ENCODE measurements at regions of chr12 and their contacts with region 1.

Region 1: GRCh38 chr12:104467346-104467837 is 10.6 kb downstream of the CHST11 start:
- DNase-seq: peak; percentile 64 to 92 (median 80)
- ATAC-seq: peak; percentile 78
- H3K4me3 ChIP-seq: no peak overlapping the region
- H3K27ac ChIP-seq: peak overlapping the region; percentile 71
- H3K4me1 ChIP-seq: peaks cover 26 to 76% of the 10 kb centered on the region in 2 experiments
- H3K27me3 ChIP-seq: no peaks in the 10 kb centered on the region
- CTCF ChIP-seq: no peak
- EP300 ChIP-seq: peak; percentile 99
- POLR2A ChIP-seq: no peak
- RAD21 ChIP-seq: peak; percentile 21 to 23; a peak in 2 of 4 replicates

Region 2: DNA sequence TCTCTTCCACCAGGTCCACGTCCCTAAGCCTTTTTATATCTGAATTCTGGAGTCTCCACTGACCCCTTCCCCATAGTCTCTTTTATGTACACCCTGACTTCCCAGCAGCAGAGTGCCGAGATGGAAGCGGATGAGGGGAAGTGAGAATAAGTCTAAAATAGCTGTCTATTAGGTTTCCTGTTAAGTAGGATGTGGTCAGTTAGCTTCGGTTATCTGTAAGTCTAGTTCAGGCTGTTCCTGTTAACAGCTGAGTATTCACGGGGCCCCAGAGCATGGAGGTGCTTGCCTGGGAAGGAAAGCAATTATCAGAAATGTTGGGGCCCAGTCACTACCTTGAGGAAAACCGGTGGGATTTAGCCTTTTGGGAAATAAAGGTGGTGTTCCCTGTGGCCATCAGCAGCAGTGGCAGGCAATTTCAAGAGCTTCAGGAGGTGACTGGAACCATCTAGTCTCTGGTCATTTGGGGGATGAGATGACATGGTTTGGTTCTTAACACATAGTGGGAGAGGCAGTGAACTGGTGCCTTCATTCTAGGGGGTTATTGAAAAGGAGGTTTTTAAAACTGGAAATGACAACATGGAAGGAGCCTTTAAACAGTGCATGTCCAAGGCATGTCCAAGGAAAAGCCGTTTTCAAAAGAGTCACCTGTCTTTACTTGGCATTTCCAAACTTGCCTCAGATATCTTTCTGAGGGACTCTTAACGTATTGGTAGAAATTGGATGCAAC is 11.2 kb after region 1 on chr12:
- CTCF ChIA-PET with region 1: no interaction called
- POLR2A ChIA-PET with region 1: interaction called, 13 read pairs
- in situ Hi-C with region 1: no loop called
- intact Hi-C with region 1: loop called (anchors 2 kb)
- DNase-seq: peak in 3 of 4 experiments; percentile 23 to 71 (median 60)
- ATAC-seq: peak; percentile 78
- H3K4me3 ChIP-seq: no peak overlapping the region
- H3K27ac ChIP-seq: peak overlapping the region; percentile 68
- H3K4me1 ChIP-seq: peaks cover 10 to 38% of the 10 kb centered on the region in 2 experiments
- H3K27me3 ChIP-seq: no peaks in the 10 kb centered on the region
- CTCF ChIP-seq: no peak
- EP300 ChIP-seq: peak; percentile 49
- POLR2A ChIP-seq: no peak
- RAD21 ChIP-seq: no peak; a peak in 1 of 4 replicates

Region 3: DNA sequence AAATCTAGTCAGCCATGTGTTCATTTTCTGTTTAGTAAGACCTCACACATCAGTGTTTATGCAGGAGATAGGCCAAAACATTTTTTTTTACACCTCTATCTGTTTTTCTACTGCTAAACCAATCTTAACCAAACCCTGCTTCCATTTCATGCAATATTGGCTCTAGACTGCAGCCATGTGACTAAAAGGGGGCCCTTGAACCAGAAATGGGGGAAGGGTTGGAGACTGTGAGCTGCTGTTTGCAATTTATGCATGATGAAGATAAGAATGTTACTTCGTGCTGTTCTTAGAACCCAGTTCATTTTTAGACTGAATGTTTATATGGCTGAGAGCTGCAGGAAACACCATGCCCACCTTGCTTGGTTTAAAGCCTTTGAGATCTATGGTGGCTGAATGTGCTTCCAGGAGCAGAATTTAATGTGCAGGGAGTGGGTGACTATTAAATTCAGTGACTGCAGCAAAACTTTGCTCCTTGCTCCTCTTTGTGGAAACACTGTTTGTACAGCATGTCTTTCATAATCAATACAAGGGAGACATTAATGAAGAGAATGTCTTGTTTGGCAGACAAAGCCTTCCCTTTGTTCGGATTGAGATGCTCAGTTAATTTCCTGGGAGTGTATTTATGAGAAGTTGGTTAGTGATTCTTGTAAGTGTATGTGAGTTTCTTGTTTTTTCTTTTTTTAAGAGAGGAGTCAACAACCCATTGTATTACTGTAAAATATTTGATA is 42.9 kb after region 1 on chr12:
- CTCF ChIA-PET with region 1: no interaction called
- POLR2A ChIA-PET with region 1: no interaction called
- in situ Hi-C with region 1: no loop called
- intact Hi-C with region 1: loop called (anchors 5 kb)
- DNase-seq: peak; percentile 60 to 85 (median 70)
- ATAC-seq: peak; percentile 86
- H3K4me3 ChIP-seq: no peak overlapping the region; the same call in 1 of the 2 replicates
- H3K27ac ChIP-seq: peak overlapping the region; percentile 81
- H3K4me1 ChIP-seq: peaks cover 0 to 30% of the 10 kb centered on the region in 2 experiments; a peak in 3 of 5 replicates
- H3K27me3 ChIP-seq: no peaks in the 10 kb centered on the region
- CTCF ChIP-seq: no peak
- EP300 ChIP-seq: peak; percentile 46; the same call in 1 of the 2 replicates
- POLR2A ChIP-seq: no peak
- RAD21 ChIP-seq: peak in 1 of 2 experiments; percentile 35; a peak in 1 of 4 replicates

Region 4: DNA sequence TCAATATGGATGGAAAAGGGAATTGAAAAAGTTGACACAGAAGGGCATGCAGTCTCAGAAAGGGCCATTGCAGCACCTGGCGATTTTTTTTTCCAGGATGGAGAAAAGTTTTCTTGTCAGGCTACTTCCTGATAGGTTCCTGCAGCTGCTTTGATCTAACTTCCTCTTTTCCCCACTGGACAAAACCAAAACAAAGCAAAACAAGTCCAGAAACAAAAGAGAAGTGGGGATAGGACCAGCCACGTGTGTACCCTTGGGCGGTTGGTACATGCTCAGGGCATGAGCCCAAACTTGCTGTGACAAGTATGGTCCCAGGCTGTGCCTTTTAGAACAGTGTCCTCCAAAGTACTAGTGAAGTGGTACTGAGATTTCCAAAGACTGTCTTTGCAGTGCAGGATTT is 79.2 kb after region 1 on chr12:
- CTCF ChIA-PET with region 1: no interaction called
- POLR2A ChIA-PET with region 1: no interaction called
- in situ Hi-C with region 1: no loop called
- intact Hi-C with region 1: no loop called
- DNase-seq: no peak
- ATAC-seq: no peak
- H3K4me3 ChIP-seq: no peak overlapping the region
- H3K27ac ChIP-seq: no peak overlapping the region
- H3K4me1 ChIP-seq: no peaks in the 10 kb centered on the region; a peak in 1 of 5 replicates
- H3K27me3 ChIP-seq: no peaks in the 10 kb centered on the region
- CTCF ChIP-seq: no peak
- EP300 ChIP-seq: no peak
- POLR2A ChIP-seq: no peak
- RAD21 ChIP-seq: no peak